ENCODE measurements at regions of chr4 and their contacts with region 1.

Region 1: GRCh38 chr4:15882675-15883086 is 55.9 kb downstream of the FGFBP1 start:
- DNase-seq: peak; percentile 73
- H3K4me3 ChIP-seq: no peak overlapping the region
- H3K27ac ChIP-seq: no peak overlapping the region
- H3K4me1 ChIP-seq: peaks cover 4% of the 10 kb centered on the region
- H3K27me3 ChIP-seq: no peaks in the 10 kb centered on the region
- CTCF ChIP-seq: peak; percentile 90 to 95

Region 2: DNA sequence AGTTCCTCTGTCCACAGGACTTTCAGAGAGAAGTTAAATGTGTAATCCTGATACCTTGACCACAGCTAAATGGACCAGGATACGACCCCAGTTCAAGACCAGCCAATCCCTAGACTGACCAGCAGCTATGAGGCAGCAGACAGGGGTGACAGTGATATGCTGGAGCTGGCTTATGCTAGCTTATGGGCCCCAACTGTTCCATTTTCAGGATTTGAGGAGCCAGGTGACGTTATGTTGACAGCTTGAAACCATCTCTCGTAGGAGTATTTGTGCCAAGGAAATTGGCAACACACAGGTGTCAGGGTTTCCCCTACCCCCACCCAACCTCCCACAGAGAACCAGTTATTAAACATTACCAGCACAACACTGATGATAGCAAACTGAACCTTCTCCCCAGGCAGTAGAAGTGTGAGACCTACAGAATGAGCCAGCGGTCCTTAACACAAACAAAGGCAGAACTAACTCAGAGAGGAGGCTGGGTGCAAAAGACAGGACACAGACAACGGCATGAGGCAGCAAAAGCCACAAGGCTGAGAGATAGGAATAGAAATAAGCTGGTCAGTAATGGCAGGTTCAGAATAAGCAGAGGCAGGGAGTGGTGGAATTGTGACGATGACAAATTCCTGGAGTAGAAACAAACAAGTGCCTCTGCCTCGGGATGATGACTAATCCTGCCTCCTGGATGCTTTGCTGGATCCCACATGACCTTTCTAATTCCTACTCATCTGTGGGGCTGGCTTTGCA is 966.0 kb before region 1 on chr4:
- CTCF ChIA-PET with region 1: no interaction called
- dilution Hi-C with region 1: no loop called
- in situ Hi-C with region 1: no loop called
- intact Hi-C with region 1: no loop called
- DNase-seq: peak; percentile 63
- H3K4me3 ChIP-seq: no peak overlapping the region
- H3K27ac ChIP-seq: no peak overlapping the region
- H3K4me1 ChIP-seq: peaks cover 11% of the 10 kb centered on the region
- H3K27me3 ChIP-seq: no peaks in the 10 kb centered on the region
- CTCF ChIP-seq: no peak

Region 3: GRCh38 chr4:15805583-15806517 is 76.8 kb before region 1 on chr4:
- CTCF ChIA-PET with region 1: interaction called, 7 read pairs
- dilution Hi-C with region 1: loop called (anchors 5 kb)
- in situ Hi-C with region 1: loop called in 1 of 2 experiments (anchors 5 kb)
- intact Hi-C with region 1: loop called (anchors 1 kb)
- DNase-seq: peak; percentile 56
- H3K4me3 ChIP-seq: no peak overlapping the region
- H3K27ac ChIP-seq: no peak overlapping the region
- H3K4me1 ChIP-seq: no peaks in the 10 kb centered on the region
- H3K27me3 ChIP-seq: no peaks in the 10 kb centered on the region
- CTCF ChIP-seq: peak; percentile 82 to 86

Region 4: DNA sequence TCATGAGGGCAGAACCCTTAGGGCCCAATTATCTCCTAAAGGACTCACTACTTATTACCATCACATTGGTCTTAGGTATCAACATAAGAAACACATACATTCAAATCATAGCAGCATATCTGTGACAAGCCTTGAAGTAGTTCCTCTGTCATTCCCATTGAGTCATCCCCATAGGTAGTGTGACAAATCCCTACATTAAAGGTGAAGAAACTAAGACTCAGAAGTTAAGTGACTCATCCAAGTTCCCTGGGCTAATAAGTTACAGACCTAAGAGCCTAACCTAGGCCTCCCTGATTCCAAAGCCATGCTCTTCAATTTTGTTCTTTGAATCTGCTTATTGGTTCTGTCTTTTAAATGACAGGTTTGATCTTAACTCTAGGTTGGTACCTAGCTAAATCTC is 46.3 kb before region 1 on chr4:
- CTCF ChIA-PET with region 1: no interaction called
- dilution Hi-C with region 1: no loop called
- in situ Hi-C with region 1: no loop called
- intact Hi-C with region 1: no loop called
- DNase-seq: peak; percentile 73
- H3K4me3 ChIP-seq: no peak overlapping the region
- H3K27ac ChIP-seq: no peak overlapping the region
- H3K4me1 ChIP-seq: peaks cover 7% of the 10 kb centered on the region
- H3K27me3 ChIP-seq: no peaks in the 10 kb centered on the region
- CTCF ChIP-seq: no peak

Region 5: GRCh38 chr4:15906024-15906443 is 23.4 kb after region 1 on chr4:
- CTCF ChIA-PET with region 1: interaction called, 6 read pairs
- dilution Hi-C with region 1: no loop called
- in situ Hi-C with region 1: no loop called
- intact Hi-C with region 1: loop called (anchors 1 kb)
- DNase-seq: peak; percentile 100
- H3K4me3 ChIP-seq: no peak overlapping the region
- H3K27ac ChIP-seq: peak overlapping the region; percentile 99
- H3K4me1 ChIP-seq: peaks cover 26% of the 10 kb centered on the region
- H3K27me3 ChIP-seq: no peaks in the 10 kb centered on the region
- CTCF ChIP-seq: peak in 1 of 2 donors; percentile 9

Region 6: DNA sequence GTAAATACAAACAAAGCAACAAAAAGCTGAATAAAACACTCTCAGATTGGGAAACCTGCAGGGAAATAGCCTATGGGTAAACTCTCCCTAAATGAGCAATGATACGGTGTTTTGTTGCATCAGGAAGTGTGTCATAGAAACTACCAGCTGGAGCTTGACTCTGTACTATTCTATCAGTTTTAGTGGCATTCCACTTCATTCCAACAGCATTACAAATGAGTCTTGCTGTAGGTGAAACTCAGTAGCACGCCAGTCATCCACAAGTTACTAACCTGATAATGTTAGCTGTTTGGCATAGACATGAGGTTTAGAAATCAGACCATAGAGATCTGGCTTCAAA is 30.9 kb after region 1 on chr4:
- CTCF ChIA-PET with region 1: no interaction called
- dilution Hi-C with region 1: no loop called
- in situ Hi-C with region 1: no loop called
- intact Hi-C with region 1: loop called (anchors 2 kb)
- DNase-seq: peak; percentile 99
- H3K4me3 ChIP-seq: no peak overlapping the region
- H3K27ac ChIP-seq: peak overlapping the region; percentile 100
- H3K4me1 ChIP-seq: peaks cover 65% of the 10 kb centered on the region
- H3K27me3 ChIP-seq: no peaks in the 10 kb centered on the region
- CTCF ChIP-seq: no peak

Region 7: GRCh38 chr4:15938182-15938581 is 55.5 kb after region 1 on chr4:
- CTCF ChIA-PET with region 1: interaction called, 14 read pairs
- dilution Hi-C with region 1: no loop called
- in situ Hi-C with region 1: no loop called
- intact Hi-C with region 1: loop called (anchors 5 kb)
- DNase-seq: peak; percentile 85
- H3K4me3 ChIP-seq: peak overlapping the region; percentile 32 to 78 (median 75)
- H3K27ac ChIP-seq: peak overlapping the region; percentile 77
- H3K4me1 ChIP-seq: peaks cover 25% of the 10 kb centered on the region
- H3K27me3 ChIP-seq: no peaks in the 10 kb centered on the region
- CTCF ChIP-seq: no peak

Region 8: DNA sequence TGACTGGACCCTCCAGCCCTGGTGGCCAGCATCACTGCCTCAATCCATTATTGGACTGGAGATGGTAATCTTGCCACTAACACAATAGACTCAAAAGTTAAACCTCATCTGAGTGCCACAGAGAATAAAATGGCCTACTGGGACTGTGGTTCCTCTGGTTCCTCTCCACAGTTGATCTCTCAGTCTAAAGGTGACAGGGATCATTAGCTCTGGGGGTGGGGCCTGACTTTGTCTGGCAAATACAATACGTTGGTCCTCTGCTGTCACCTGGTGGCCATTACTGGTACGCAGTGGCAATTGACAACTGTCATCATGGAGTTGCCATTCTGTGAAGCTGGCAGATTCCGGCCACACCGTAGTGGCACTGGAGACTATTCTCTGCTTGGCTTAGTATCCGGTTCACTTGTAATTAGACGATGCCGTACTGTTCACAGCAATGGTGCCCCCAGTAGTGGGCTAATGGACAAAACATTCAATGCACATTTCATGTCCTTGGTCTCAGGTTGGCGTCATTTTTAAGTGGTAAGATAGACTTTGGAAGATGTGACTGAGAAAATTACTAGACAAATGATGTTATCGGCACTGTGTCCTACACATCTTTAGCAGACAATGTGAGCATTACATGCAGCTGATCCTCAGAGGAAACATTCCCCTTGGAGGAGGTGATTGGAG is 73.6 kb after region 1 on chr4:
- CTCF ChIA-PET with region 1: interaction called, 43 read pairs
- dilution Hi-C with region 1: loop called (anchors 5 kb)
- in situ Hi-C with region 1: loop called (anchors 5 kb)
- intact Hi-C with region 1: loop called (anchors 1 kb)
- DNase-seq: peak; percentile 68
- H3K4me3 ChIP-seq: no peak overlapping the region
- H3K27ac ChIP-seq: no peak overlapping the region
- H3K4me1 ChIP-seq: peaks cover 5% of the 10 kb centered on the region
- H3K27me3 ChIP-seq: no peaks in the 10 kb centered on the region
- CTCF ChIP-seq: peak; percentile 99 to 100

Region 9: DNA sequence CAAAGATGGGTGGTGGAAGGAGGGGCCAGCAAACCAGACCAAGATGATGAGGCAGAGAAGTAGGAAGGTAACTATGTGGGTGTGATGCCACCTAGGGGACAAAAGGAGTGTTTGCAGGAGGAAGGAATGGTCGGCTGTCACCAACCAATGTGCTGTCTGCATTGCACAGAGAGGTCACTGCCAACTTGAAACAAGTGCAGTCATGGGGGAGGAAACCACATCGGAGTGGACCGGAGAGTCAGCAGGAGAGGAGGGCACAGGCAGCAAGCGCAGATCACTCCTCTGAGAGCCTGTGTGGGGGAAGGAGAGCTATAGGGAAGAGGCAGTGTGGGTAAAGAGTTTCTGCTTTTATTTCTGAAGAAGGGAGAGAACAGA is 118.8 kb after region 1 on chr4:
- CTCF ChIA-PET with region 1: no interaction called
- dilution Hi-C with region 1: no loop called
- in situ Hi-C with region 1: no loop called
- intact Hi-C with region 1: loop called (anchors 1 kb)
- DNase-seq: peak; percentile 56
- H3K4me3 ChIP-seq: no peak overlapping the region
- H3K27ac ChIP-seq: no peak overlapping the region
- H3K4me1 ChIP-seq: no peaks in the 10 kb centered on the region
- H3K27me3 ChIP-seq: peaks cover 6% of the 10 kb centered on the region
- CTCF ChIP-seq: peak; percentile 80 to 86

Region 10: GRCh38 chr4:16801356-16801755 is 918.7 kb after region 1 on chr4:
- CTCF ChIA-PET with region 1: no interaction called
- dilution Hi-C with region 1: no loop called
- in situ Hi-C with region 1: no loop called
- intact Hi-C with region 1: no loop called
- DNase-seq: no peak
- H3K4me3 ChIP-seq: no peak overlapping the region
- H3K27ac ChIP-seq: no peak overlapping the region
- H3K4me1 ChIP-seq: no peaks in the 10 kb centered on the region
- H3K27me3 ChIP-seq: no peaks in the 10 kb centered on the region
- CTCF ChIP-seq: no peak

Measured in mammary epithelial cell (primary cell).